Endothelial cell of umbilical vein (primary cell): ENCODE measurements at regions of chr19 and their contacts with region 1.

Region 1: GRCh38 chr19:46728693-46729676 is 12.1 kb upstream of the PRKD2 start:
- DNase-seq: peak; percentile 88
- H3K4me3 ChIP-seq: peak overlapping the region in 1 of 3 experiments; percentile 6
- H3K27ac ChIP-seq: peak overlapping the region; percentile 67
- H3K4me1 ChIP-seq: peaks cover 63% of the 10 kb centered on the region
- H3K27me3 ChIP-seq: no peaks in the 10 kb centered on the region
- CTCF ChIP-seq: peak; percentile 98 to 99
- POLR2A ChIP-seq: no peak

Region 2: GRCh38 chr19:46614114-46614722 is 114.8 kb before region 1 on chr19:
- CTCF ChIA-PET with region 1: interaction called, 9 read pairs
- POLR2A ChIA-PET with region 1: no interaction called
- dilution Hi-C with region 1: no loop called
- intact Hi-C with region 1: loop called (anchors 2 kb)
- DNase-seq: peak; percentile 73
- H3K4me3 ChIP-seq: no peak overlapping the region
- H3K27ac ChIP-seq: no peak overlapping the region
- H3K4me1 ChIP-seq: peaks cover 4% of the 10 kb centered on the region
- H3K27me3 ChIP-seq: no peaks in the 10 kb centered on the region
- CTCF ChIP-seq: peak; percentile 75 to 83
- POLR2A ChIP-seq: no peak

Region 3: DNA sequence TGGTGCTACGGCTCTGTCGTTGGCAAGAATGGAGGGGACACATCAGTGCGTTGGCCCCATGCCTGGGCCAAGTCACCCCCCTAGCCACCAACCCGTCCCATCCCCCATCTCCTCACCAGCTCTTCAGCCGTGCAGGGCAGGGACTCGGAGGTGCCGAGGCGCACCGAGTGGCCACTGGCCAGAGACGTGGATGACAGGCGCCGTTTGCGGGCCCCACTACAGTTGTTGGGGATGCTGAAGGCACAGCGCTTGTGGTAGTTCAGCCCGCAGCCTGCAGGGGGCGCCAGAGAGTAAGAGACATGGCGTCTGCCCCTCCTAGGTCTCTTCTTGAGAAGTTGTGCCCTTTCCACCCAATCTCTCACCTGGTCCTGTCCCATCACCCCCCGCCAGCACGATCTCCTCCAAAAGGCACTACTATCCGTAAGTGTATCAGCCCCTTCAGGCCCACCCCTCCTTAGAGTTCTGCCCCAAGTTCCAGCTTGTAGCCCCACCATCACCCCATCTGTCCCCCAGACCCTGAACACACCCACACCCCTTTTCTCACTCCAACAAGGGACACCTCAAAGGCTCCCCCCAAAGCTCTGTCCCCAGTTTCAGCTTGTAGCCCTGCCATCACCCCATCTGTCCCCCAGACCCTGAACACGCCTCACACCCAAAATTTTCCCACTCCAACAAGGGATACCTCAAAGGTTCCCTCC is 24.5 kb before region 1 on chr19:
- CTCF ChIA-PET with region 1: interaction called, 95 read pairs
- POLR2A ChIA-PET with region 1: no interaction called
- dilution Hi-C with region 1: no loop called
- intact Hi-C with region 1: loop called (anchors 1 kb)
- DNase-seq: peak; percentile 64
- H3K4me3 ChIP-seq: no peak overlapping the region
- H3K27ac ChIP-seq: no peak overlapping the region
- H3K4me1 ChIP-seq: no peaks in the 10 kb centered on the region
- H3K27me3 ChIP-seq: no peaks in the 10 kb centered on the region
- CTCF ChIP-seq: peak; percentile 95 to 98
- POLR2A ChIP-seq: peak; percentile 26

Region 4: GRCh38 chr19:46741447-46741846 is 12.5 kb after region 1 on chr19:
- CTCF ChIA-PET with region 1: interaction called, 12 read pairs
- POLR2A ChIA-PET with region 1: no interaction called
- dilution Hi-C with region 1: no loop called
- intact Hi-C with region 1: no loop called
- DNase-seq: no peak
- H3K4me3 ChIP-seq: no peak overlapping the region
- H3K27ac ChIP-seq: no peak overlapping the region
- H3K4me1 ChIP-seq: peaks cover 9% of the 10 kb centered on the region
- H3K27me3 ChIP-seq: no peaks in the 10 kb centered on the region
- CTCF ChIP-seq: no peak
- POLR2A ChIP-seq: no peak